Activated B cell treated with CpG ODN at 0.5 μM for 24 hours (primary cell): ENCODE measurements at regions of chr4 and their contacts with region 1.

Region 1: DNA sequence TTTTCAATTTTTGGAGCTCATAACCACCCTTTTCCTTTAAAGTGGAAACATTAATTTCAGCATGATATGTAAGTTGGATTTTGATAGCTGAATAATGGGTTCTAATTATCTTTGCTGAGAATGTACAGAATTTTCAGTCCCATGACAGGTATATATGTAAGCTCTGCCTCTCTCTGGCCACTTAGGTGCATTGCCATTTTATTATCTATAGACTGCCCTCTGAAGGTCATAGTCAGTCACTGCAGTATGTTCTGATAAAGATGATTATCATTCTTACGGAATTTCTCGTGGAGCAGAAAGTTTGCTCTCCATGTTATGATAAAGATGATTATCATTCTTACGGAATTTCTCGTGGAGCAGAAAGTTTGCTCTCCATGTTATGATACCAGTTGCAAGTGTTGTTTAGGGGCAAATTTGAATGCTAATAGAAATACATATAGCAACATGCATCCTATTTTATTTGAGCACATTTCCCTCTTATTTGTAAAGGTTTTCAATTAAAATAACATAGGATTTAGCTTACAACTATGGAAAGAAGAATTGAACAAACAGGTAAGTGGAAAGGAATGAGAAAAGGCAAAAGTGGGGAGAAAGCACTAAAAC is 10.4 kb downstream of the AFP start:
- DNase-seq: no peak
- ATAC-seq: peak; percentile 90
- H3K4me3 Mint-ChIP-seq: no peak overlapping the region
- H3K27ac Mint-ChIP-seq: no peak overlapping the region
- H3K4me1 Mint-ChIP-seq: no peaks in the 10 kb centered on the region
- H3K27me3 Mint-ChIP-seq: peaks cover 26% of the 10 kb centered on the region
- CTCF ChIP-seq: no peak

Region 2: DNA sequence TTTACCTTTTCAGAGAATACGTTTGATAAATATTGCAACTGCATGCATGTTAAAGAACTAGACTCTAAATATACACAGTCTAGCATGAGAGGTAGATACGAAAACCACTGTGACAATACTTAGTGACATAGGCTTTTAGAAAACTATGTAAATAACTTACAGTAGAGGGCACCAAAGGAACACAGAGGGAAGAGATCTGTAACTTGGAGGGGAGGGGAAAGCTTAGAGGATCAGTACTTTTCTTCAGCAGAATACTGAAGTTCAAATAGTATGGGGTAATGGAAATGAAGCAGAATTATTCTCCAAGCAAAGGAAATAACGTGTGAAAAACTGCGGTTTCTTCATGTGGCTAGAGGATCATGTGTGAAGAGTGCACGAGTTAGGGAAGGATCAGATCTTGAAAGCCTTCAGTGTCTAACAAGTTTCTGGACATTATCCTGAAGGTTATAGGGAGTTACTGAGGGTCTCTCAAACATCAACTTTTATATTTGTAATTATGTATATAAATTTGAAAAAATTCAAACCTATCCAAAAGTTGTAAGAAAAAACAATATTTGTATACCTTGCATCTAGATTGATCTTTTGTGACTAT is 1150.4 kb before region 1 on chr4:
- CTCF ChIA-PET with region 1: no interaction called
- POLR2A ChIA-PET with region 1: no interaction called
- intact Hi-C with region 1: loop called (anchors 10 kb)
- DNase-seq: no peak
- ATAC-seq: no peak
- H3K4me3 Mint-ChIP-seq: no peak overlapping the region
- H3K27ac Mint-ChIP-seq: no peak overlapping the region
- H3K4me1 Mint-ChIP-seq: no peaks in the 10 kb centered on the region
- H3K27me3 Mint-ChIP-seq: peaks cover 1% of the 10 kb centered on the region
- CTCF ChIP-seq: no peak

Region 3: DNA sequence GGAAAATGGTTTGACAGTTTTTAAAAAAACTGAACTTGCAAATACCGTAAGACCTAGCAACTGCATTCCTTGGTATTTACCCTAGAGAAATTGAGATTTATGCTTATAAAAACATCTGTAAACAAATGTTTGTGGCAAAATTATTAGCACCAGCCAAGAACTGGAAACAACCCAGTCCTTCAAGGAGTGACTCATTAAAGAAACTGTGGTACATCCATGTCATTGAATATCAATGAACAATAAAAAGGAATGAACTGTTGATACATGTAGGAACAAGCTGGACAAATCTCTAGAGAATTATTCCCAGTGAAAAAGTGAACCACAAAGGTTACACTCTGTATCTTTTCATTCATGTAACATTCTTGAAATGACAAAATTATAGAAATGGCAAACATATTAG is 637.2 kb before region 1 on chr4:
- CTCF ChIA-PET with region 1: no interaction called
- POLR2A ChIA-PET with region 1: no interaction called
- intact Hi-C with region 1: no loop called
- DNase-seq: no peak
- ATAC-seq: no peak
- H3K4me3 Mint-ChIP-seq: no peak overlapping the region
- H3K27ac Mint-ChIP-seq: no peak overlapping the region
- H3K4me1 Mint-ChIP-seq: no peaks in the 10 kb centered on the region
- H3K27me3 Mint-ChIP-seq: no peaks in the 10 kb centered on the region
- CTCF ChIP-seq: no peak

Region 4: GRCh38 chr4:73311428-73311827 is 135.0 kb before region 1 on chr4:
- CTCF ChIA-PET with region 1: interaction called, 3 read pairs
- POLR2A ChIA-PET with region 1: no interaction called
- intact Hi-C with region 1: loop called (anchors 2 kb)
- DNase-seq: no peak
- ATAC-seq: no peak
- H3K4me3 Mint-ChIP-seq: no peak overlapping the region
- H3K27ac Mint-ChIP-seq: no peak overlapping the region
- H3K4me1 Mint-ChIP-seq: no peaks in the 10 kb centered on the region
- H3K27me3 Mint-ChIP-seq: no peaks in the 10 kb centered on the region
- CTCF ChIP-seq: no peak

Region 5: GRCh38 chr4:73499996-73500765 is 53.7 kb after region 1 on chr4:
- CTCF ChIA-PET with region 1: no interaction called
- POLR2A ChIA-PET with region 1: no interaction called
- intact Hi-C with region 1: no loop called
- DNase-seq: no peak
- ATAC-seq: no peak
- H3K4me3 Mint-ChIP-seq: no peak overlapping the region
- H3K27ac Mint-ChIP-seq: no peak overlapping the region
- H3K4me1 Mint-ChIP-seq: no peaks in the 10 kb centered on the region
- H3K27me3 Mint-ChIP-seq: no peaks in the 10 kb centered on the region
- CTCF ChIP-seq: no peak